ENCODE measurements at regions of chr7 and their contacts with region 1.

Region 1: DNA sequence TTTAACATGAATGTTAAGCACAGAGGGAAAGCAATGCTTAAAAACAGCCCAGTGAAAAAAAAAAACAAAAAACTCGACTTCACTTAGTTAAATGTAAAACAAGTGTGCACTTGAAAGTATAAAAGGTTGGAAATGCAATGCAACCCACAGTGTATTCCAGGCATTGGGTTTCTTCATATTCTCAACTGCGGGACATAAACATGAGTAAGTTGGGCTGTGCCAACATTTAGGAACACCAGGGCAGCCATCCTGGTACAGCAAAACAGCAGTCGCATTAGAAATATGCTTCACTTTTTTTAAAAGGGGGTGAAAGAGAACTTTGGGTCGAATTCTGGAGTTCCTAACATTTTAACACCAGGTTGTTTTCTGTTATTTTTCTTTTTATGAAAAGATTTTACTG is 937 bp downstream of the STEAP1 start:
- DNase-seq: no peak

Region 2: GRCh38 chr7:89798599-89798996 is 356.6 kb before region 1 on chr7:
- intact Hi-C with region 1: no loop called
- DNase-seq: no peak

Region 3: DNA sequence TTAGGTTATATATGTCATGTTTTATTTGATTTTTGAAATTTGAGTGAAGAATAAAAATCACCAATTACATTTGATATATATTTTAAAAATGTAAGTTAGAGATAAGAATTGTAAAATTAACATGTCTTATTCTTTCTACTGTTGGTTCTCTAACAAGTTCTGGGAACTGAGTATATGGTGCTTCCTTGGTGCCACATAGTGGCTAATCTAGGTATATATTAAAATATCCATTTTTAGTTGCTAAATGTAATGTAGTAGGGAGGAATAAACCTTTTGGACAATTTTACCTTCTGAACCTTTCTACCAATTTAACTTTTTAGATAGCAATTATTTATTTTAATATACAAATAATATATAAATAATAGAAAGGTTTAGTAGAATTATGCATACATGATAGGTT is 107.2 kb after region 1 on chr7:
- intact Hi-C with region 1: loop called in 1 of 2 experiments (anchors 10 kb)
- DNase-seq: no peak

Region 4: GRCh38 chr7:90320801-90321494 is 165.7 kb after region 1 on chr7 and contains the start of gene FAM237B:
- intact Hi-C with region 1: no loop called
- DNase-seq: no peak
- total RNA-seq, gene FAM237B: not detected

Region 5: GRCh38 chr7:90424720-90425119 is 269.5 kb after region 1 on chr7:
- intact Hi-C with region 1: loop called in 1 of 2 experiments (anchors 10 kb)
- DNase-seq: no peak